HEK293 (cell line): ENCODE measurements at regions of chr16 and their contacts with region 1.

Region 1: GRCh38 chr16:66521951-66522771 is 27.8 kb downstream of the TK2 start:
- H3K4me3 ChIP-seq: no peak overlapping the region
- H3K27ac ChIP-seq: no peak overlapping the region
- H3K4me1 ChIP-seq: peaks cover 8% of the 10 kb centered on the region; the same call in 1 of the 2 replicates
- CTCF ChIP-seq: no peak

Region 2: DNA sequence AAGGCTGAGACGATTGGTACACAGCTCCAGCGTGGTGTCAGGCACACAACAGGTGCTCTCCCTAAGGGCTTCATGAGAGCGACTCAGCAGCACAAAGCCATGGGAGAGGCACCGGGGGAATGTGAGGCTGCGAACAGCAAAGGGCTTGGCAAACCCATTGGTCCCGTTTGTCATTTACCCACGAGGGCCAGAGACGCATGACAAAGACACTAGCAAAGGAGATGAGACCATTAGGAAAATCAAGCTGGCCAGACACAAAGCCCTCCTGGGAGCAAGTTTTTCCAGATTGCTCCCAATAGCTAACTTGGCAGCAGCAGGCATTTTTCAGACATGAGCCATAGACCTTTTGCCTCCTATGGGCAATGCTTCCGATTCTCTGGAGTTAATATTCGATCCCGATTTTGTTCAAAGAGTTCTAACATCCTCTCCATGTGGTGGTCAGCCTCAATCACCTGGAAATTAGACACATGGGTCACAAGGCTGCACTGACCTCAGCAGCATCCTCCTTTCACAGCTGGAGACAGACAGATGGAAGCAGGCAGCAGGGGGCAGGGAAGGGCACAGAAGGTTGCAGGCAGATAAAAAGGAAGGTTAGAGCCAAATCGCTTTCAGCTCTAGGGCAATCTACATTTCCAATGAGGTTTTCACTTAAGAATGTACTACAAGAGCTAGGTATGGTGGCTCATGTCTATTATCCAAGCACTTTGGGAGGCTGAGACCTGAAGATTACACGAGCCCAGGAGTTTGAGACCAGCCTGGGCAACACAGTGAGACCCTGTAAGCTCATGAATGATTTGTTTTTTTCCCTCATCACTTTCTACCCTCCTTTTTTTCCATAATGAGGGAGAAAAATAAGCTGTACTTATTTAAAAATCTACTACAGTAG is 10.3 kb before region 1 on chr16:
- CTCF ChIA-PET with region 1: no interaction called
- POLR2A ChIA-PET with region 1: interaction called, 10 read pairs
- H3K4me3 ChIP-seq: no peak overlapping the region
- H3K27ac ChIP-seq: no peak overlapping the region
- H3K4me1 ChIP-seq: peaks cover 4% of the 10 kb centered on the region; the same call in 1 of the 2 replicates
- CTCF ChIP-seq: no peak